Mammary epithelial cell (primary cell): ENCODE measurements at regions of chr9 and their contacts with region 1.

Region 1: GRCh38 chr9:109244157-109245132 is 76.4 kb downstream of the EPB41L4B start:
- DNase-seq: peak; percentile 40
- H3K4me3 ChIP-seq: no peak overlapping the region
- H3K27ac ChIP-seq: no peak overlapping the region
- H3K4me1 ChIP-seq: no peaks in the 10 kb centered on the region
- H3K27me3 ChIP-seq: no peaks in the 10 kb centered on the region
- CTCF ChIP-seq: peak; percentile 93 to 98

Region 2: DNA sequence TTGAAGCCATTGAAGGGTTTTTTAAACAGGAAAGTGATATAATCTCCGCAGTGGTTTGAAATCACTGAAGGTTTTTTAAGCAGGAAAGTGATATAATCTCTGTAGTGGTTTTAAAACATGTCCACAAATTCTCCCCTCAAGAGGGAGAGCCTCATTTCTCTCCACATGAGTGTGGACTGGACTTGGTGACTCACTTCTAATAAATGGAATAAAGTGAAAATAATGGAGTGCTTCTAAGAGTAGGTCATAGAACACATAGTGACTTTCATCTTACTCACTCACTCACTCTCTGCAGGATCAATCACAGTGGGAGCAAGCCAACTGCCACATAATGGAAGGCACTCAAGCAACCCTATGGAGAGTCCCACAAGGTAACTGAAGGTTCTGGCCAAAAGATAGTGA is 243.2 kb before region 1 on chr9:
- CTCF ChIA-PET with region 1: interaction called, 29 read pairs
- dilution Hi-C with region 1: no loop called
- in situ Hi-C with region 1: no loop called
- intact Hi-C with region 1: no loop called
- DNase-seq: peak; percentile 91
- H3K4me3 ChIP-seq: no peak overlapping the region
- H3K27ac ChIP-seq: no peak overlapping the region
- H3K4me1 ChIP-seq: peaks cover 11% of the 10 kb centered on the region
- H3K27me3 ChIP-seq: no peaks in the 10 kb centered on the region
- CTCF ChIP-seq: peak in 1 of 2 donors; percentile 4

Region 3: DNA sequence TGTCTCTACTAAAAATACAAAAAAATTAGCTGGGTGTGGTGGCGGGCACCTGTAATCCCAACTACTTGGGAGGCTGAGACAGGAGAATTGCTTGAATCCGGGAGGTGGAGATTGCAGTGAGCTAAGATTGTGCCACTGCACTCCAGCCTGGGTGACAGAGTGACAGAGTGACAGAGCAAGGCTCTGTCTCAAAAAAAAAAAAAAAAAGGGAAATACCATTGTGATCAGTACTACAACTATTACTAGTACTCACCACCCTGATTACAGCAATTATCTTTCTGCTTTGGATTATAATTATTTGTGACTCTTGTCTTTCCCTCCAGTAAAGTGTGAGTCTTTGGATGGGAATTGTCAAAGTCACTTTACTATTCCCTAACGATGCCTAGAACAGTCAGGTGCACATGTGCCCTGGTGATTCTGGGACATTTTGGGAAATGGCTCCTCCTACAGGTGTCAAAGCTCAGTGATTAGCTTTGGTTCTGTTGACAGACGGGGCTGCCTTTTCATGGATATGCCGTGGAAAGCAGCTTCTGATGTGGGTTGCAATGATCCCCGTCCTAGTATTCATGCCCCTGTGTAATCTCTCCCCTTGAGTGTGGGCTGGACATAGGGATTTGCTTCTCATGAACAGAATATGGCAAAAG is 45.6 kb before region 1 on chr9:
- CTCF ChIA-PET with region 1: no interaction called
- dilution Hi-C with region 1: loop called (anchors 5 kb)
- in situ Hi-C with region 1: no loop called
- intact Hi-C with region 1: no loop called
- DNase-seq: no peak
- H3K4me3 ChIP-seq: no peak overlapping the region
- H3K27ac ChIP-seq: no peak overlapping the region
- H3K4me1 ChIP-seq: no peaks in the 10 kb centered on the region
- H3K27me3 ChIP-seq: no peaks in the 10 kb centered on the region
- CTCF ChIP-seq: peak; percentile 20 to 27

Region 4: GRCh38 chr9:109349421-109349846 is 105.0 kb after region 1 on chr9:
- CTCF ChIA-PET with region 1: no interaction called
- dilution Hi-C with region 1: no loop called
- in situ Hi-C with region 1: no loop called
- intact Hi-C with region 1: loop called (anchors 1 kb)
- DNase-seq: peak; percentile 73
- H3K4me3 ChIP-seq: no peak overlapping the region
- H3K27ac ChIP-seq: no peak overlapping the region
- H3K4me1 ChIP-seq: peaks cover 20% of the 10 kb centered on the region
- H3K27me3 ChIP-seq: peaks cover 11% of the 10 kb centered on the region
- CTCF ChIP-seq: no peak

Region 5: DNA sequence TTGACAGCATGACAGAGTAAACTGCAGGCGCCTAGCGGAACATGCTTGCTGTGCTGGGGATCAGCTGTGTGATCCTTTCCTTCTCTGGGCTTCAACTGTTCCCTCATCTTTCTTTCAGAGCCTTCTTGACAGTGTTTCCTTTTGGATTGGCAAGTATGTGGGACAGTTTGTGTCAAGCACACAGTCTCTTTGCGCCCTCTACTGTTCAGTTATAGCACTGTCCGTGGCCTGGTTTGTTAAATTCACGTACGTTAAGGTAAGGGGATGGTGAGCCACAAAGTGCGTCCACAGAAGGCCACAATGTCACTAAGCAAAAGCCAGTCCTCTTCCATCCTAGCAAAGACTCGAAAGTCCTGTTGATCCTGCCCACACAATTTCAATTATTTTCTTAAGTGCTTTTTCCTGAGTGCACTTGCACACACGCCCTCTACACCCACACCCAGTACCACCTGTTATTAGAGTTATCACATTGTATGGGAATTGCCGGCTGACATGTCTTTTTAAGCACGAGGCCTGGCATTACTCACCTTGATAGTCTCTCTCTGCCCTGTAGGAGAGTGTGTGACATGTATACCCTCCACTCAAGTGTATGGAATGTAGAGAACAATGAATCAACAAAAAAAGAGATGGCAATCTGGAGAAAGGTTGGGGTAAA is 276.2 kb after region 1 on chr9:
- CTCF ChIA-PET with region 1: no interaction called
- dilution Hi-C with region 1: no loop called
- in situ Hi-C with region 1: no loop called
- intact Hi-C with region 1: loop called (anchors 5 kb)
- DNase-seq: peak; percentile 81
- H3K4me3 ChIP-seq: no peak overlapping the region
- H3K27ac ChIP-seq: peak overlapping the region; percentile 9
- H3K4me1 ChIP-seq: peaks cover 11% of the 10 kb centered on the region
- H3K27me3 ChIP-seq: no peaks in the 10 kb centered on the region
- CTCF ChIP-seq: peak; percentile 93 to 98